Cardiac septum (tissue), 1 donor: ENCODE measurements at regions of chr2 and their contacts with region 1.

Region 1: DNA sequence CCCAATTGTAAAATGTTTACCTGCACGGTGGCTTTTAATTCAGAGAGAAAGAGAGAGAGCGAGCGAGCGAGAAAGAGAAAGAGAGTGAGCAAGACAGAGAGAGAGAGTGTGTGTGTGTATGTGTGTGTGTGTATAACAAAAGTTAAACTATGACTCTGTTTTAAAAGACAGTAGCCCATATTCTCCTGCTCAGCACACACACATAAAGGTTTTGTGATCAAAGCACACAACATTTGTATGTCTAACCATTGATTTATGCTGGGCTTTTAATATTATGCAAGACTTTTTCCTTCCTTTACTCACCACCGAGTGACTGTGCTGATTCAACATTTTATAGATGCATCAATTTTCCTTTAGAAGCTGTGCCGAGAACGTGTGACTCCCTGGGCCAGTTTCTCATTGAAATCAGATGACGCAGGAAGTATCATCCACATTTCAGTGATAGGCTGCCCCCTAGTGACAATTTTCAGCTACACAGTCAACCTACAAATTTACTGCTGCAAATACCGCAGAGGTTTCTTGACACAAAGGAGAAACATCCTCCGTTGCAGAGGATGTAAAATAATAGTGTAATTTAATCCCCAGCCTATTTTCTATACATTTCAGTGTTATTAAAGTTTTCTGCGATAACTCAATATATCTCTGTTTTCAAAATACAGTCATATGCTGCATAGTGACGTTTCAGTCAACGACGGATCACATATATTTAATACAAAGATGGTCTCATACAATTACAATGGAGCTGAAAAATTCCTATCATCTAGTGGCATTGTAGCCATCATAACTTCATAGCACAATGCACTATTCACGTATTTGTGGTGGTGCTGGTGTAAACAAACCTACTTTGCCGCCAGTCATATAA is 165.9 kb upstream of the TANK start:
- DNase-seq: no peak

Region 2: GRCh38 chr2:160252278-160252887 is 742.0 kb before region 1 on chr2:
- intact Hi-C with region 1: loop called (anchors 5 kb)
- DNase-seq: no peak

Region 3: DNA sequence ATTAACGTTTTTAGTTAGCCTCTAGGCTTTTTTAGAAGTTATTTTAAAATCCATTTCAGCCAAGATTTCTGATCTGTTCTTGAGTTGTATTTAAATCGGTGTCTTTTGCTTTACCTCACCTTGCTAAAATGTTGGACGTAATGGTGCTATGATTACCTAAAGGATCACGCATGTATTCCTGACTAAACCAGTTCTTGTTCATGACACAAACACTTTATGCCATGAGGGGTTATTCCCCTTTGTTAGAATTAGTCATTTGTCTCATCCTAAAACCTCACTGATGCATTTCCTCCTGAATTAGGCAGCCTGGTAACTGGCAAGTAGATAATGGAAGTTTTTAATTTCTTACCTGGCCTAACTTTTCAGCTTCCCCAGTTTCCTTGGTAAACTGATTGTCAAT is 19.6 kb before region 1 on chr2:
- intact Hi-C with region 1: no loop called
- DNase-seq: no peak